Mammary epithelial cell (primary cell): ENCODE measurements at regions of chr14 and their contacts with region 1.

Region 1: DNA sequence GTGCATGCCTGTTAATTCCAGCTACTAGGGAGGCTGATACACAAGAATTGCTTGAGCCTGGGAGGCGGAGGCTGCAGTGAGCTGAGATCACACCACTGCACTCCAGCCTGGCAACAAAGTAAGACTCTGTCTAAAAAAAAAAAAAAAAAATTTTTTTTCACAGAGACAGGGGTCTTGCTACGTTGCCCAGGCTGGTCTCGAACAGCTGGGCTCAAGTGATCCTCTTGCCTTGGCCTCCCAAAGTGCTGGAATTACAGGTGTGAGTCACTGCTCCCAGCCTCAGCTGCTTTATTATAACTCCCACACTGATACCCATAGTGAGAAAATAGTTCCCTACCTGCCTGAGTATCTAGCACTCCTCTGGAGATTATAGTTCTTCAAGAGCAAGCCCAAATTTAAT is 11.2 kb downstream of the HAUS4 start:
- DNase-seq: no peak
- H3K4me3 ChIP-seq: no peak overlapping the region
- H3K27ac ChIP-seq: no peak overlapping the region
- H3K4me1 ChIP-seq: no peaks in the 10 kb centered on the region
- H3K27me3 ChIP-seq: no peaks in the 10 kb centered on the region
- CTCF ChIP-seq: no peak

Region 2: DNA sequence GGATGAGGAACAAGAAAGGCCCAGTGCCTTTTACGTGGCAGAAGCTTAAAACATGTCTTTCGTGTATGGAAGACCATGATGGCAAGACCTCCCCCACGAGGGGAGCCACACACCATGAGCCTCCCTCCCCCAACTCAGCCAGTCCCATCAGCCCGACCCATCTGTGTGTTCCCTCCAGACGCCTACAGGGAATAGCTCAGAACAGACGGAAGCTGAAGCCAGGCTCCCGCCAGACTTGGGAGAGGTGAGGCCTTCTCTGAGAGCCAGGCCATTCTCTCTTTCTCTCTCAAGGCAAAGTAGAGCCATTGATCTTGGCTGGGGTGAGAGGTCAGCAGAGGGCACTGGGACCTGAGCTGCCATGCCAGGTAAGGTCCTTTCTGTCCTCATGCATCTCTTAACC is 53.2 kb before region 1 on chr14:
- CTCF ChIA-PET with region 1: no interaction called
- dilution Hi-C with region 1: loop called (anchors 5 kb)
- in situ Hi-C with region 1: no loop called
- intact Hi-C with region 1: no loop called
- DNase-seq: no peak
- H3K4me3 ChIP-seq: no peak overlapping the region
- H3K27ac ChIP-seq: no peak overlapping the region
- H3K4me1 ChIP-seq: peaks cover 19% of the 10 kb centered on the region
- H3K27me3 ChIP-seq: no peaks in the 10 kb centered on the region
- CTCF ChIP-seq: no peak

Region 3: DNA sequence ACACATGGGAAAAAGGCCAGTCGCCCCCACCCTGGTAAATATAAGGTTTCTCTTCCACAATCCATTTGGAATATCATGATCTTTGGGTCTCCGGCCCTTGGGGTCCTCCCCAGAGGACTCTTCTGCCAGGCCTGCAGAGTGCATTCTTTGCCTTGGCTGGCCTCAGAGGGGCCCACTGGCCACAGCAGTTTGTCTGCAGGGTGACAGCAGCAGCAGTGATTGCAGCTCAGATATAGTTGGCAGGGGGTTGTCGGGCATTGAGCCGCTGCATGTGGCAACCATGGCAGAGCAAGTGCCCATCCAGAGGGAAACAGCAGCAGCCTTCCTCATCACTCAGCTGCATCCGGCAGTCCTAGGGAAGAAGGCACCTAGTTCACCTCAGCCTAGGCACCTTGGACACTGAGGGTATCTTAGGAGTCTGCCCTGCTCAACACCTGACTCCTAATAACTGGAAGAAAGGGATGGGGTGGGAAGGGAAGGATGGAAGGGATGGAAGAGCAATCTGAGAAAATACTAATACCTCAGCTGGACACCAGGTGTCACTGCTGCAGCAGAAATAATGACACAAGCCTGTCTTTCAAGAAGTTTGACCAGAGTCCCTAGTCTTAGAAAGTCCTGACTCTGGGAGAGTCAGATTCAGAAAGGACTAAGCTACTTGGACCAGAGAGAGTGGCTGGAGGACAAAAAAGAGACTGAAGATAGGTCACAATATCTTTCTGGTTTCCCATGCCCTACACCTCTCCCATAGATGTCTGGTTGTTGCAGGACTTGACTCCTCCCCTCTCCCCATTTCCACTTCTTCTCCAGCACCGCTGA is 27.8 kb after region 1 on chr14:
- CTCF ChIA-PET with region 1: no interaction called
- dilution Hi-C with region 1: no loop called
- in situ Hi-C with region 1: no loop called
- intact Hi-C with region 1: no loop called
- DNase-seq: peak; percentile 57
- H3K4me3 ChIP-seq: no peak overlapping the region
- H3K27ac ChIP-seq: no peak overlapping the region
- H3K4me1 ChIP-seq: peaks cover 40% of the 10 kb centered on the region
- H3K27me3 ChIP-seq: no peaks in the 10 kb centered on the region
- CTCF ChIP-seq: peak; percentile 51 to 64

Region 4: DNA sequence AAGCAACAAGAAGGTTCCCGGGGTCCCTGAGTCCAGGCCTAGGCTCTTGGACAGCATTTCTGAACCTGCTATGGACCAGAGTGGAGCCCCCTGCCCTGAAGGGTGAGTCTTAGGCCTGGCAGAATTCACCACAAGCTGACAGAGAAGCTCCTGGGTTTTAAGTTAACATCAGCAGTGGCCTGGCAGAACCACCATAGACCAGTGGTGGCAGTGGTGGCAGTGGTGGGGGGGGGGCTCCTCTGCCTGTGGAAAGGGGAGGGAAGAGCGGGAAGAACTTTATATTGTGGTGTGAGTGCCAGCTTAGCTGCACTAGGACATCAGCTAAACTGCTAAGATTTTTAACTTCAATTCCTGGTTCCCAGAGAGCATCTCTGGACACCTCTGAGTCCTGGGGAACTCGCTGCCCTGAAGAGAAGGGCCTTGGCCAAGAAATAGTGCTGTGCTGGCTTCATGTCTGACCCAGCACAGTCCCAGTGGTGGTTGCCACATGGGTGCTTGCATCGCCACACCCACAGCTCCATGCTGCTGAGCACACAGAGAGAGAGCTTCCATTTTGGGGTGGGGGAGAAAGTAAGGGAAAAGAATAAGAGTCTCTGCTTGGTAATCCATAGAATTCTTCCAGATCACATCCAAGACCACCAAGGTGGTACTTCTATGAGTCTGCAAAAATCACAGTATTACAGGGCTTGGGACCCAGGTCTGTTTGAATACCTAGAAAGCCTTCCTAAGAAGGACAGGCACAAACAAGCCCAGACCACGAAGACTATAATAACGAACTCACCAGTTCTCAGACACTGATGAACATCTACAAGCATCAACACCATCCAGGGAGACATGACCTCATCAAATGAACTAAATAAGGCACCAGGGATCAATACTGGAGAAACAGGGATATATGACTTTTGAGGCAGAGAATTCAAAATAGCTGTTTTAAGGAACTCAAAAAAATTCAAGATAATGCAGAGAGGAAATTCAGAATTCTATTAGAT is 271.7 kb after region 1 on chr14:
- CTCF ChIA-PET with region 1: no interaction called
- dilution Hi-C with region 1: no loop called
- in situ Hi-C with region 1: no loop called
- intact Hi-C with region 1: no loop called
- DNase-seq: peak; percentile 38
- H3K4me3 ChIP-seq: no peak overlapping the region
- H3K27ac ChIP-seq: no peak overlapping the region
- H3K4me1 ChIP-seq: peaks cover 6% of the 10 kb centered on the region
- H3K27me3 ChIP-seq: no peaks in the 10 kb centered on the region
- CTCF ChIP-seq: no peak